Activated CD4-positive, alpha-beta memory T cell treated with anti-CD3 and anti-CD28 coated beads, Interleukin-2, amount 10 ng/mL, durations not matched to agents 7 days and 5 days (primary cell): ENCODE measurements at regions of chr14 and their contacts with region 1.

Region 1: GRCh38 chr14:89394934-89395333 is 22.1 kb downstream of the FOXN3 start:
- DNase-seq: no peak
- H3K4me3 Mint-ChIP-seq: no peak overlapping the region
- H3K27ac Mint-ChIP-seq: no peak overlapping the region
- H3K4me1 Mint-ChIP-seq: peaks cover 8% of the 10 kb centered on the region
- H3K27me3 Mint-ChIP-seq: no peaks in the 10 kb centered on the region

Region 2: GRCh38 chr14:89805501-89805900 is 410.6 kb after region 1 on chr14:
- CTCF ChIA-PET with region 1: interaction called, 10 read pairs
- POLR2A ChIA-PET with region 1: no interaction called
- DNase-seq: no peak
- H3K4me3 Mint-ChIP-seq: no peak overlapping the region
- H3K27ac Mint-ChIP-seq: no peak overlapping the region
- H3K4me1 Mint-ChIP-seq: no peaks in the 10 kb centered on the region
- H3K27me3 Mint-ChIP-seq: peaks cover 2% of the 10 kb centered on the region